Mucosa of descending colon (tissue), 3 donors: ENCODE measurements at regions of chr3 and their contacts with region 1.

Region 1: GRCh38 chr3:195894780-195895607 is 13.4 kb downstream of the TNK2 start:
- DNase-seq: peak; percentile 72 to 78 (median 74)
- ATAC-seq: peak; percentile 83
- H3K4me3 ChIP-seq: peak overlapping the region; percentile 19
- H3K4me1 ChIP-seq: peaks cover 21% of the 10 kb centered on the region
- CTCF ChIP-seq: peak; percentile 90

Region 2: DNA sequence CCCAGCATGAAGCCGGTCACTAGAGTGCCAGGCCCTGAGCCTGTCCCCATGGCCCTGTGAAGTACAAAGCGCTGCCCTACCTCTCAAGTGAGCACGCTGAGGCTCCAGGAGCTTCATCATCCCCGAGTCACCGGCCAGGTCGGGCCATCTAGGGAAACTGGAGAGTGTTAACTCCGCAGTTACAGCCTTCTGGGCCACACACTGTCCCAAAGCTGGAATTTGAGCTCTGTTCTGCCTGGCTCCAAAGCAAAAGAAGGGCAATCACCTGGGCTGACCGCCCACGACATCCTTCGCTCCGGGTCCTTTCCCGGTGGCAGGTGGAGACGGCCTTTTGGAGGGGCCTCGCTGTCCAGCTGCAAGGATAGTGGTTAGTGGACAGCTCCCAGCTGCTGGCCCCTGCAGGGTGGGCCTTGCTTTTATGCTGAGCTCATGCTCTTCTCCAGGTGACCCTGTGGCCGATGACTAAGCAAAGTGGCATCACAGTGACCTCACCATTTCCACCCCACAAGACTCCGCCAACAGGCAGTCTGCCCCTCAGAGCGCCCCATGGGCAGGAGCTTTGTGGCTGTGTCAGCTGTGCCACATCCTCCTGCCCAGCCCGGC is 79.7 kb before region 1 on chr3:
- intact Hi-C with region 1: no loop called
- DNase-seq: no peak
- ATAC-seq: peak; percentile 6
- H3K4me3 ChIP-seq: no peak overlapping the region
- H3K4me1 ChIP-seq: no peaks in the 10 kb centered on the region
- CTCF ChIP-seq: no peak

Region 3: GRCh38 chr3:195855471-195856386 is 39.3 kb before region 1 on chr3:
- intact Hi-C with region 1: loop called in 1 of 2 experiments (anchors 2 kb)
- DNase-seq: peak in 1 of 3 donors; percentile 54
- ATAC-seq: peak; percentile 50
- H3K4me3 ChIP-seq: no peak overlapping the region
- H3K4me1 ChIP-seq: no peaks in the 10 kb centered on the region
- CTCF ChIP-seq: no peak

Region 4: DNA sequence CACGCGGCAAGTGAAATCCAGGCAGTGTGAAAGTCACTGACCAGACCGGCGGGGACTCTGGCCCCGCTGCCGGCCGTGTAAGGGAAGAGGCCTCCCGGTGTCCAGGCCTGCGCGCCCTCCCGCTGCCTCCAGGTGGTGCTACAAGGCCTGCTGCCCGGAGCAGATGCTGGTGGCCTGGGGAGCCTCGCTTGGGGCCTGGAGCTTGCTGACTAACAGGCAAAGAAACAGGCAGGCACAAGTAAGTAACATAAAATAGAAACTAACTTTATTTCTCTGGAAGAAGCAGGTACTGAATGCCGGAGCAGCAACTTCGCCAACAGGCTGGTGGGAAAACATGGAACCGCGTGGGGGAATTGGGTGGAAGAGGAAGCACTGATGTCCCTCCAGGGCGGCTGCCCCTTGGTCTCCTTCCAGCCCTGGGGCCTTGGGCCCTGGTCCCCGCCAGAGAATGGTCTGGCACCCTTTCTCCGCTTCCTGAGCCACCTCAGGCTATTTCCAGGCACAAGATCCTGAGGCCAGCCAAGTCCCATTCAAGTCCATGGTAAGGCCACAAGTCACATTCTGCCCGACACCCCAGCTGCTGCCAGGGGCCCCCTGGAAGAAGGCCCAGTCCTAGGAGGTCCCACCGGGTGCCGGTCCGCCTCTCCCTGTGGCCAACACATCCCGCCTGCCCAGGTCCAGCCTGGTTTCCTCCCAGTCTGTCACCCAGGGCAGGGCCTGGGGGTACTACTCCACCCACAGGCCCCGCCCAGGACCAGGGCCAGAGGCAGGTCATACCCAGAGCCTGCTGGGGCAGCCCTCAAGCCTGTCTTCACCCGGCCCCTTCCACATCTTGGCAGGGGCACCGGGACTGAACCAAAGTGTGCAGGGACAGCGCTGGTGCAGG is 31.6 kb before region 1 on chr3:
- intact Hi-C with region 1: loop called in 1 of 2 experiments (anchors 2 kb)
- DNase-seq: peak; percentile 86 to 93 (median 91)
- ATAC-seq: peak; percentile 97
- H3K4me3 ChIP-seq: no peak overlapping the region
- H3K4me1 ChIP-seq: no peaks in the 10 kb centered on the region
- CTCF ChIP-seq: peak; percentile 90